ENCODE measurements at regions of chr12 and their contacts with region 1.

Region 1: DNA sequence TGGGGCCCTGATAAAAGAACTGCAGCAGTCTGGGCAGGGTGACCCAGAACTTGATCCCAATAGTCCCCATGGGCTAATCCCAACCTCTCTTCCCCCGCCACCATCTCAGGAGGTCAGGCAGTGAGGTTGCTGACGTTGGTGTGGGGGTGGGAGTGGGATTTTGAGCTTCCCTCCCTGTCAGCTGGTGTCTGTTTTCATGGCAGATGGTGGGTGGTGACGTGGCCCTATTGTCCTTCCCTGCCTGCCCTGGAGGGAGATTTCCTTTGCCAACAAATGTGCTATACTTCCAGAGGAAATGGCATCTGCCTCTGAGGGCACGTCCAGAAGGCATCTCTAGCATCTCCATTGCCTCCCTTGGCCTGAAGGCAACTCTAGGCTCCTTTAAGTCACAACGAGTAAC is 37.7 kb downstream of the NEUROD4 start:
- DNase-seq: no peak
- H3K4me3 ChIP-seq: no peak overlapping the region
- H3K27ac ChIP-seq: no peak overlapping the region
- H3K27me3 ChIP-seq: no peaks in the 10 kb centered on the region
- CTCF ChIP-seq: no peak

Region 2: GRCh38 chr12:55073043-55074022 is 15.9 kb after region 1 on chr12:
- CTCF ChIA-PET with region 1: interaction called, 11 read pairs
- POLR2A ChIA-PET with region 1: no interaction called
- DNase-seq: peak; percentile 41
- H3K4me3 ChIP-seq: no peak overlapping the region
- H3K27ac ChIP-seq: no peak overlapping the region
- H3K27me3 ChIP-seq: no peaks in the 10 kb centered on the region
- CTCF ChIP-seq: peak; percentile 90